Right ventricle myocardium inferior (tissue), 1 donor: ENCODE measurements at regions of chr6 and their contacts with region 1.

Region 1: DNA sequence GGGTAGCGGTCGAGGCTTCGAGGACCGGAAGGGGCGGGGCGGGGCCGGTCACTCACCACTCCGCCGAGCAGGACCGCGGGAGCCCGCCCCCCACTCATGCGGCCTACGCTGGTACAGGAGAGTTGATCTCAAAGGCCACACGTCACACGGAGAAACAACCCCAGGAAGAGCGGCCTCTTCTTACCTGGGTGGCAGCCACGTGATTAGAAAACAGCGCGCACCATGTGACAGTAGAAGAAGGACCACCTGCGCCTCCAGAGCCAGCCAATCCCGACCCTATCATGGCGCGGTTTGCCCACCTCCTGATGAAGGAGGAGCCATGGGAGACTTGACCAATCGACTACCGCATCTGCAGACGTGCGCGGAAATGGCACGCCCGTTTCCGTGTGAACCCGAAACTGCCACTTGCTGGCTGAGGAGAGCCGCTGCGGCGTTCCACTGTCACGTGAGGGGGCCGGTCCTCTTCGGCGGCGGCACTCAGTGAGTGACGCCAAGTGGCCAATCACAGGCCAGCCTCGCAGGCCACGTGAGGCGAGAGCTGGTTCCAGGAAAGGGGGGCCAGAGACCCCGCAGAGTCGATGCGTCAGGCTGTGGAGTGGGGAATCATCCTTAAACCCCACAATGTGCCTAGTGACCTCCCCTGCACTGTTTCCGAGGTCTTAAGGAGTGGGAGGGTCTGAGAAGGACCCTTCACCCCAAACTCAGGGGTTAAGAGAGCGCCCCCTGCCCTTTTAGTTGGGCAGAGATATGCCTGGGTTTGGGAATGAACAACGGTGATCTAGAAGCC is at the start of gene CUTA:
- DNase-seq: peak; percentile 99
- ATAC-seq: peak; percentile 95
- total RNA-seq, gene CUTA: 107 TPM

Region 2: GRCh38 chr6:32637219-32637880 is 780.7 kb before region 1 on chr6 and contains the start of gene HLA-DQA1:
- intact Hi-C with region 1: no loop called
- DNase-seq: no peak
- ATAC-seq: peak; percentile 54
- total RNA-seq, gene HLA-DQA1: 5.3 TPM

Region 3: DNA sequence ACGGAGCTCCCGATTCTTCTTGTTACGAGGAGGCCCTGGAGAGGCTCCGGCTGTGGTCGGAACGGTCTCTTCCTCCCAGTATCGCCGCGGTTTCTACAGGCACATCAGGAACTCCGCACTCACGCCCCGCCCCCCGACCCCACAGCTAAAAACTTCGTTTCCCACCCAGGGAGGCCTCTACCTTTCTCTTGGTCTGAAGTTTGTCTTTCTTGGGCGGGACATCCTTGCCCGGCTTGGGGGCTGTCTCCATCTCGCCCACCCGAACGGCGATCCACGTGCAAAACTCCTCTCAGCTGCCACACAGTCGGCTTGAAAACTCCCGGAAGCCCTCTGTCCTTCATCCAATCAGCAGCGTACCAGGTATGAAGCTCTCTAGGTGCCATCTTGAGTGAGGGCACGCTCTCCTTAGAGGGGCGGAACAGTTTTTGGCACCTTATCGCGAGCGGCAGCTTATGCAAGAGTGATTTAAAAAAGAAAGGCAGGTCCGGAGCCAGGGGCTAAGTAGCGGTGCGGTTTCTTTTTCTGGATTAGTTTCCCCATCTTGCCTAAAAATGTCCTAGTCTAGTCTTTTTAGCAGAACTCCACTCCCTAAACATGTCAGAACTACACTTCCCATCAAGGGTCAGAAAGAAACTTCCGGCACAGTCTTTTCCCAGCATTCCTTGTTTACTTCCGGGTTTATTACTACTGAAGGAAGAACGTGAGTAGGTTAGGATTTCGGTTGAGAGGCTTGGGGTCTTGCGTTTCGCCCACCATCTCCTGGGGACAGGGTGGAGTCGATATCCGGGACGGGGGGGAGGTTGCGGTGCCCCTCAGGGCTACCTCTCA is 129.0 kb before region 1 on chr6 and contains the starts of genes PFDN6 and WDR46:
- intact Hi-C with region 1: loop called (anchors 10 kb)
- DNase-seq: peak; percentile 86
- ATAC-seq: peak; percentile 95
- total RNA-seq, gene PFDN6: 57.8 TPM
- total RNA-seq, gene WDR46: 15.9 TPM

Region 4: GRCh38 chr6:33329058-33329457 is 89.0 kb before region 1 on chr6:
- intact Hi-C with region 1: no loop called
- DNase-seq: no peak
- ATAC-seq: no peak

Region 5: GRCh38 chr6:33397541-33397940 is 20.6 kb before region 1 on chr6:
- intact Hi-C with region 1: no loop called
- DNase-seq: no peak
- ATAC-seq: no peak

Region 6: DNA sequence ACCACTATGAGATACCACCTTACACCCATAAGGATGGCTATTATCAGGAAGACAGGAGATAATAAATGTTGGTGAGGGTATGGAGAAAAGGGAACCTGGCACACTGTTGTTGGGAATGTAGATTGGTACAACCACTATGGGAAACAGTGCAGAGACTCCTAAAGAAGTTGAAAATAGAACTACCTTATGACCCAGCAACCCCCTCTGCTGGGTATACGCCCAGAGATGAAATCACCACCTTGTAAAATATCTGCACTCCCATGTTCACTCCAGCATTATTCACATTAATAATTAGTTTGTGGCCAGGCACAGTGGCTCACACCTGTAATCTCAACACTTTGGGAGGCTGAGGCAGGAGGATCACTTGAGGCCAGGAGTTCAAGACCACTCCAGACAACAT is 63.1 kb after region 1 on chr6:
- intact Hi-C with region 1: no loop called
- DNase-seq: no peak
- ATAC-seq: no peak